ENCODE measurements at regions of chr12 and their contacts with region 1.

Region 1: DNA sequence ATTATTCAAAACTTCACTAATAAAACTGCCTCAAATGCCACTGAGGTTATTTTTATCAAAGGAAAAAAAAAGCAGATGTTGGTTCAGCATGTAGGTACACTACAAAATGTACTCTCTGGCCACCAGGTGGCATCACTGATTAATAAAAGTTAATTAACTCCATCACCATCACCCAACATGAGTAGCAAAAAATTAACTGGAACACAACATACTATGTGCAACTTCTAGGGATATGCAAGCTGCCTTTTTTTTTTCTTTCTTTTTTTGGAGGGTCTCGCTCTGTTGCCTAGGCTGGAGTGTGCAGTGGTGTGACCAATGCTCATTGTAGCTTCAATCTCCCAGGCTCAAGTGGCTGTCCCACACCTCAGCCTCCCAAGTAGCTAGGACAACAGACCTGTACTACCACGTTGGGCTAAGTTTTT is 43.8 kb upstream of the NR2C1 start:
- DNase-seq: peak in 4 of 5 donors; percentile 47 to 94 (median 78)
- H3K4me3 ChIP-seq: no peak overlapping the region
- H3K27ac ChIP-seq: no peak overlapping the region
- H3K4me1 ChIP-seq: no peaks in the 10 kb centered on the region
- H3K27me3 ChIP-seq: no peaks in the 10 kb centered on the region
- CTCF ChIP-seq: peak; percentile 77

Region 2: DNA sequence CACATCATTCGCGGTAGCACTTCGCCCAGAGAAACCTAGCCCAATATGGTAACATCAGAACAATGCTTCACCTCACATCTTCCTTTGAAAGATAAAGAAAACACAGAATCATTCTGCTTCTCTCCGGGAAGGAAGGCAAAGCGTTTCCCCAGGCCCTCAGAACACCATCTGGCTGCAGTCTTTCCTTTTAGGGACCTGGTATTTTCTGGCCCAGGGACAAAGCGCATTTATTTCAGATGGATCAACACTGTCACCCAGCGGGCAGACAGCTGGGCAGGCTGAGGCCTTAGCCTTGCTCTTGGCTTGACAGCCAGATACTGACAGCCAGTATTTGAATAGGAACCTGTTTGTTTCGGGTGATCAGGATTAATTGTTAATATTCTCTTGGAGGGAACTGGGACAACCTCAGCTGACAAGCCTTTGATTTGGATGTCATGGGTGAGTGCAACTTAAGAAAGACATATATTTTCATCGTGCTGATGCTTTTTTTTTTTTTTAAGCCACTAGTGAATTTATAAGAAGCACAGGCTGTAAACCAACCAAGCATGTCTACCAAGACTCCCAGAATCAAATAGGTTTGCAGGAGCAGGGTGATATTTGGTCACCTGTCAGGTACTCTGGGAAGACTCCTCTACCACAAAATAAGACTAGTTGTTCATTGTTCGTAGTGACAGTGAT is 219.3 kb after region 1 on chr12:
- intact Hi-C with region 1: loop called (anchors 10 kb)
- DNase-seq: peak; percentile 83 to 94 (median 86)
- H3K4me3 ChIP-seq: peak overlapping the region in 2 of 3 donors; percentile 8 to 52
- H3K27ac ChIP-seq: no peak overlapping the region
- H3K4me1 ChIP-seq: peaks cover 0 to 8% (median 2%) of the 10 kb centered on the region in 3 donors
- H3K27me3 ChIP-seq: no peaks in the 10 kb centered on the region
- CTCF ChIP-seq: peak; percentile 94

Region 3: DNA sequence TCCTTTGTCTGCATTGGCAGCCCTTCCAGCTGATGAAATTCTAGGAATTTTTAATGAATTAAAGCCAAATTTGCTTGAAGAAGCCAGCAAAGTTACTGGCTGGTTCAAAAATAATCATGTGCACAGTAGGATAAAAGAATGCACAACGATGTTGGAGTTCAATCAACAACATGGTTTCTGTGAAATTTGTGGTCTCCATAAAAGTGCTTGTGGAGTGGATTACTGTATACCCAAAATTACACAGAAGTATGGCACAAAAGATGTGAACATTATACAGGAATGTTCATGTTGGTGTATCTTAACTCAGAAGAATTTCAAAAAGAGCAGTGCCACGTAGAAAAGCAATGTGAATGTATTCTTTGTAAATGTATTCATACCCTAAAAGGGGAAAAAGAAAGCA is 251.7 kb after region 1 on chr12:
- intact Hi-C with region 1: no loop called
- DNase-seq: no peak
- H3K4me3 ChIP-seq: no peak overlapping the region
- H3K27ac ChIP-seq: no peak overlapping the region
- H3K4me1 ChIP-seq: peaks cover 0 to 9% (median 0%) of the 10 kb centered on the region in 3 donors
- H3K27me3 ChIP-seq: no peaks in the 10 kb centered on the region
- CTCF ChIP-seq: no peak

Measured in kidney (tissue), 22 donors.